Heart left ventricle (tissue), 16 donors: ENCODE measurements at regions of chr21 and their contacts with region 1.

Region 1: GRCh38 chr21:44347911-44348753 is 5.3 kb upstream of the TRPM2 start:
- DNase-seq: peak in 1 of 5 donors; percentile 24
- ATAC-seq: no peak
- H3K4me3 ChIP-seq: no peak overlapping the region
- H3K27ac ChIP-seq: no peak overlapping the region
- H3K4me1 ChIP-seq: peaks cover 0 to 26% (median 0%) of the 10 kb centered on the region in 12 donors
- H3K27me3 ChIP-seq: peaks cover 9 to 40% (median 30%) of the 10 kb centered on the region in 9 donors
- CTCF ChIP-seq: no peak
- POLR2A ChIP-seq: no peak

Region 2: DNA sequence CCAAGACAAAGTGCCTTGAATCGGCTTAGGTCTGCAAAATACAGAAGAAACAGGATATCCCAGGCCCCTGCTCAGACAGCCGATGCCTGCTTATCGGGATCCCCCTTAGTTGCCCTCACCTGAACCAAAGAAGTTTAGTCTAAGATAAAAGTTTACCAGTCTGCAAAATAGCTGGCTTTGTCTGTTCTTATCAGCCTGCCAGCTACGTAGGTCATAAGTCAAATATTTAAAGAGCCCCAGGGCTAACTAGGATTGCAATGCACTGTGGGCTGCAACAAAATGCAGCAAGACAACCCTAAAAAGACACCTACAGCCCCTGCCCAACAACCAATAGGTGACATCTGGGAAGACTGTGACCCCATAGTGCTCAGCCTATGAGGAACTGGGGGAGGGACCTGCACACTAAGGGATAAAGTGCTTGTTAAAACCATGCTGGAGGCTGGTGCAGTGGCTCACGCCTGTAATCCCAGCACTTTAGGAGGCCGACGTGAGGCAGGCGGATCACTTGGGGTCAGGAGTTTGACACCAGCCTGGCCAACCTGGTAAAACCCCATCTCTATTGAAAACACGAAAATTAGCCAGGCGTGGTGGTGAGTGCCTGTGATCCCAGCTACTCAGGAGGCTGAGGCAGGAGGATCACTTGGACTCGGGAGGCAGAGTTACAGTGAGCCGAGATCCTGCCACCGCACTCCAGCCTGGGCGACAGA is 134.6 kb after region 1 on chr21:
- intact Hi-C with region 1: loop called in 1 of 10 experiments (anchors 10 kb)
- DNase-seq: no peak
- ATAC-seq: no peak
- H3K4me3 ChIP-seq: no peak overlapping the region
- H3K27ac ChIP-seq: no peak overlapping the region
- H3K4me1 ChIP-seq: peaks cover 0 to 14% (median 3%) of the 10 kb centered on the region in 12 donors
- H3K27me3 ChIP-seq: peaks cover 0 to 20% (median 0%) of the 10 kb centered on the region in 9 donors
- CTCF ChIP-seq: no peak
- POLR2A ChIP-seq: no peak